Heart right ventricle (tissue), 16 donors: ENCODE measurements at regions of chr4 and their contacts with region 1.

Region 1: DNA sequence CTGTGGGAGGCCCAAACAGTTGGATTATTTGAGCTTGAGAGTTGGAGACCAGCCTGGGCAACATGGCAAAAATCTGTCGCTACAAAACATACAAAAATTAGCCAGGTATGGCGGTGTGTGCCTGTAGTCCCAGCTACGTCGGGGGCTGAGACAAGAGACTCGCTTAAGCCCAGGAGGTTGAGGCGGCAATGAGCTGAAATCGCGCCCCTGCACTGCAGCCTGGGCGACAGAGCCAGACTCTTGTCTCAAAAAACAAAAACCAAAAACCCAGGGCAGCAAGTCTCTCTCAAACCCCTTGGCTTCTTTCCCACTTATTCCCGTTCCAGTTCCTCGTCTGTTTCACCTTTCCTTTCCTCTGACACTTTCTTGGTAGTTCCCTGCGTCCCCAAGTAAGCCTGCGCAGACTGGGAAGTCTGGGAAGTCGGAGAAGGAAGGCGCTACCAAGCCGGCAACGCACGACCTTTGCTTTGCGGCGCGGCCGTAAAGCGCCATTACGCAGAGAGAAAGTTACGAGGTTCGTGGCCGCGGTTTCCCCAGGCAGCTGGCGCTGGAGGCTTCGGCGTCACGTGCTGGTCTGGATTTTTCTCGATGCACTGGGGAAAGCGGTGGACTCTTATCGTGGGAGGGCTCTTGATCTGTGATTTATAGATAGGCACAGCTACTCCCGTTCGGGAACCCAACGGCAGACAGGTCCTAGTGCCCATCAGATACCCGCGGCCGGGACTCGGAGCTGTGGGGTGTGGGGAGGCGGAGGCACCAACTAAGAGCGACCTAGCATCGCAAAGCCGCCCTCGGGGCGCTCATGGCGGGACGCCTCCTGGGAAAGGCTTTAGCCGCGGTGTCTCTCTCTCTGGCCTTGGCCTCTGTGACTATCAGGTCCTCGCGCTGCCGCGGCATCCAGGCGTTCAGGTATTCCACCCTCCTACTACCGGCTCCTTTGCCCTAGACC is at the start of gene NUDT9:
- DNase-seq: peak; percentile 94 to 97
- ATAC-seq: peak; percentile 93 to 98 (median 97)
- H3K4me3 ChIP-seq: peak within 1 kb of the TSS; percentile 62 to 96 (median 78)
- H3K27ac ChIP-seq: peak within 1 kb of the TSS; percentile 79 to 94 (median 89)
- H3K4me1 ChIP-seq: peaks cover 4 to 35% (median 30%) of the 10 kb centered on the region in 9 donors
- H3K27me3 ChIP-seq: no peaks in the 10 kb centered on the region
- CTCF ChIP-seq: no peak
- total RNA-seq, gene NUDT9: 24.1 to 33.0 (median 27.7) TPM

Region 2: DNA sequence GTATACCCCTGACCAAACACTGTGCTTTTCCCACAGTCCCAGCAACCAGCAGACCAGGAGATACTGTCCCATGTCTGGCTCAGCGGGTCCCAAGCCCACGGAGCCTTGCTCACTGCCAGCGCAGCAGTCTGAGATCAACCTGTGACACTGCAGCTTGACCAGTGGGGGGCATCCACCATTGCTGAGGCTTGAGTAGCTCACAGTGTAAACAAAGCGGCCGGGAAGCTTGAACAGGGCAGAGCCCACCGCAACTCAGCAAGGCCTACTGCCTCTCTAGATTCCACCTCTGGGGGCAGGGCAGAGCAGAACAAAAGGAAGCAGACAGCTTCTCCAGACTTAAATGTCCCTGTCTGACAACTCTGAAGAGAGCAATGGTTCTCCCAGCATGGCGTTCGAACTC is 631.3 kb before region 1 on chr4:
- intact Hi-C with region 1: no loop called
- DNase-seq: no peak
- ATAC-seq: no peak
- H3K4me3 ChIP-seq: no peak overlapping the region
- H3K27ac ChIP-seq: no peak overlapping the region
- H3K4me1 ChIP-seq: no peaks in the 10 kb centered on the region
- H3K27me3 ChIP-seq: no peaks in the 10 kb centered on the region
- CTCF ChIP-seq: peak in 1 of 9 donors; percentile 15

Region 3: DNA sequence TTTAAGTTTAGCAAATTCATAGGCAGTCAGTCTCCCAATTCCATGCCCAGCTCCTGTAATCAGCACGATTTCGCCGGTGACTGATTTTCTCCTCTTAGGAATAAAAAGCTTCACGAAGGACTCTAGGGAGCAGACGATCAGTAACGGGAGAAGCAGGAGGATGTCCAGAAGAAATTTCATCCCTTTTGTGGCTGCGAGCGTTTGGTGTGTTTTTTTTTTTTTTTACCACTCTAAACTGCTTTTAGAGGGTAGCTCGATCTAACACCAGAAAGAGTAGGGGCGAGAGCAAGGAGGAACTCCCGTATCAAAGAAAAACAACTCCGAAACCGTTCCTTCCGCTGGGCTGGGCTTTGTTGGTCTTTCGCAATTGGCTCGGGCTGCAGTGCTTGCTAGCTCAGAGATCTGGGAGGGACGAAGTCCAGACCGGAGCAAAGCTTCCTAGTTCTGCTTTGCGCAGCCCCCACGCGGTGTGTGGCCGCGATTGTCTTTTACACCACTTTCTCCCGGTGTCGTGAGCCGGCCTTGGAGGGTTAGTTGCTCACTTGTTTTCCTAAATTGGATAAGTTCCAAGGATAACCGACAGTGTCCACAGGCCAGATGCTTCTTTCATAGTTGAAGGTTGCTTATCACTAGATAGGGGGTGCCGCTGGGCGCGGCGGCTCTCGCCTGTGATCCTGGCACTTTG is 31.3 kb before region 1 on chr4 and contains the start of gene HSD17B11:
- intact Hi-C with region 1: loop called in 3 of 10 experiments (anchors 2 to 5 kb)
- DNase-seq: peak; percentile 82 to 92
- ATAC-seq: peak; percentile 99 to 100 (median 100)
- H3K4me3 ChIP-seq: peak within 1 kb of the TSS; percentile 56 to 79 (median 68)
- H3K27ac ChIP-seq: peak within 1 kb of the TSS; percentile 78 to 95 (median 89)
- H3K4me1 ChIP-seq: peaks cover 0 to 41% (median 25%) of the 10 kb centered on the region in 9 donors
- H3K27me3 ChIP-seq: no peaks in the 10 kb centered on the region
- CTCF ChIP-seq: peak in 4 of 9 donors; percentile 5 to 44 (median 35)
- total RNA-seq, gene HSD17B11: 4.6 to 24.1 (median 11.9) TPM